Activated B cell treated with CpG ODN at 0.5 μM for 24 hours (primary cell): ENCODE measurements at regions of chr1 and their contacts with region 1.

Region 1: DNA sequence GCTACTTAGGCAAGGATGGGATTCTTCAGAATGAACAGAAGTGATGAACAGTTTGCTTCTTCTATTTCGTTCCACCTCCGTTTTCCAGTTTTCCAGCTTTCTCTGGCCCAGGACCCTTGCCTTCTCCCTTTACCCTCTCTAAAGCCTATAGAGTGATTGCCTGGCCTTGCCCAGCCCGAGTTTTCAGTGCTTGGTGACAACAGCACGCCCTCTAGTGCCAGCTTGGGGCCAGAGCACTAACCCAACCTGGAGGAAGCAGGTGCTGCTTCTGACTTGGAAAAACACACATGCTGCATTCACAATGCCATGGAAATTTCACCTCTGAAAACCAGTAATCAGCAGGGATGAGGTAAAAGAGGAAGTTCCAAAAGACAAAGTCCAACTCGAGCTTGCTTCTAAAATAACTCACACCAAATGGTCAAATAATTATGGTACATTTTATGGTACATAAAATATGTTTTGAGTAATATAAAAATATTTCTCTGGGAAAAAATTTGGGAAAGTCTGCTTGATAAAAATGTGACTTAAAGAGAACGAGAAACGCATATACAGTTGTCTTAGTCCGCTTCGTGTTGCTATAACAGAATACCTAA is 26.1 kb downstream of the UBE2T start:
- DNase-seq: peak; percentile 51
- ATAC-seq: peak; percentile 78
- H3K4me3 Mint-ChIP-seq: no peak overlapping the region
- H3K27ac Mint-ChIP-seq: no peak overlapping the region
- H3K4me1 Mint-ChIP-seq: no peaks in the 10 kb centered on the region
- H3K27me3 Mint-ChIP-seq: peaks cover 10% of the 10 kb centered on the region
- CTCF ChIP-seq: peak; percentile 64

Region 2: GRCh38 chr1:202009326-202010179 is 306.1 kb before region 1 on chr1:
- CTCF ChIA-PET with region 1: no interaction called
- POLR2A ChIA-PET with region 1: no interaction called
- intact Hi-C with region 1: loop called (anchors 5 kb)
- DNase-seq: no peak
- ATAC-seq: peak; percentile 65
- H3K4me3 Mint-ChIP-seq: peak overlapping the region; percentile 28
- H3K27ac Mint-ChIP-seq: no peak overlapping the region
- H3K4me1 Mint-ChIP-seq: peaks cover 10% of the 10 kb centered on the region
- H3K27me3 Mint-ChIP-seq: no peaks in the 10 kb centered on the region
- CTCF ChIP-seq: peak; percentile 64

Region 3: GRCh38 chr1:202154766-202155477 is 160.8 kb before region 1 on chr1:
- CTCF ChIA-PET with region 1: interaction called, 29 read pairs
- POLR2A ChIA-PET with region 1: no interaction called
- intact Hi-C with region 1: loop called (anchors 1 kb)
- DNase-seq: no peak
- ATAC-seq: peak; percentile 73
- H3K4me3 Mint-ChIP-seq: no peak overlapping the region
- H3K27ac Mint-ChIP-seq: no peak overlapping the region
- H3K4me1 Mint-ChIP-seq: peaks cover 37% of the 10 kb centered on the region
- H3K27me3 Mint-ChIP-seq: no peaks in the 10 kb centered on the region
- CTCF ChIP-seq: no peak

Region 4: DNA sequence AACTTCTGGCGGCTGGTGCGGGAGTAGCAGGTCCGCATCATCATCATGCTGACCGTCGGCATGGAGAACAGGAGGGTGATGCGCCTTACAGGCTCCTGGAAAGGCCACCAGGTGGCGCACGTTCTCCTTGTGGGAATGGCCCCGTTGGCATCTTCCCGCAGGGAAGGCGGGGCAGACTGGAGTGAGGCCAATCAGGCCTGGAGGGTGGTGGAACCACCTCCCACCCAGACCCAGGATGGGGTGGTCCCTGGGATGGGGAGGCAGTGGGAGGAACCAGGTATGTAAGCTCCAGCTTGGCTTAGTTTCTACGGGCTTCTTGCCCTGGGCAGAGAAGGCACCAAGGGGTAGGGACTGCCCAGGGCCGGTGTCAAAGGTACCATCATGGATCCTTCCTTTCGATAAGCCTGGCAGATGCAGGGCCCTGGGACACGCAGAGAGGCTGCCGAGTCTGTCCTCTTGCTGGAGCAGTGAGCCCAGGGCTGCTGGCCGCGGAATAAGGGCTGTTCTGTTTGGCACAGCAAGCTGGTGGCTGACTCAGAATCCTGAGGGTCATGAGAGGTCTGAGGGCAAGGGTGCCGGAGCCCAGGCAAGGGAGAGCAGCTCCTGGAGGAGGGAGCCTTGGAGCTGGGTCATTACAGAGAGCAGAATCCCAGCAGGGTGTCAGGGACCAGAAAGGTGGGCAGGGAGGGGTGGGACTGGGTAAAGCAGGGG is 130.8 kb before region 1 on chr1:
- CTCF ChIA-PET with region 1: interaction called, 18 read pairs
- POLR2A ChIA-PET with region 1: no interaction called
- intact Hi-C with region 1: loop called (anchors 1 kb)
- DNase-seq: peak; percentile 55
- ATAC-seq: peak; percentile 65
- H3K4me3 Mint-ChIP-seq: no peak overlapping the region
- H3K27ac Mint-ChIP-seq: no peak overlapping the region
- H3K4me1 Mint-ChIP-seq: peaks cover 3% of the 10 kb centered on the region
- H3K27me3 Mint-ChIP-seq: peaks cover 32% of the 10 kb centered on the region
- CTCF ChIP-seq: no peak

Region 5: GRCh38 chr1:202192770-202193613 is 122.7 kb before region 1 on chr1:
- CTCF ChIA-PET with region 1: interaction called, 40 read pairs
- POLR2A ChIA-PET with region 1: no interaction called
- intact Hi-C with region 1: loop called (anchors 1 kb)
- DNase-seq: peak; percentile 57
- ATAC-seq: peak; percentile 70
- H3K4me3 Mint-ChIP-seq: peak overlapping the region; percentile 64
- H3K27ac Mint-ChIP-seq: no peak overlapping the region
- H3K4me1 Mint-ChIP-seq: peaks cover 18% of the 10 kb centered on the region
- H3K27me3 Mint-ChIP-seq: peaks cover 30% of the 10 kb centered on the region
- CTCF ChIP-seq: no peak

Region 6: DNA sequence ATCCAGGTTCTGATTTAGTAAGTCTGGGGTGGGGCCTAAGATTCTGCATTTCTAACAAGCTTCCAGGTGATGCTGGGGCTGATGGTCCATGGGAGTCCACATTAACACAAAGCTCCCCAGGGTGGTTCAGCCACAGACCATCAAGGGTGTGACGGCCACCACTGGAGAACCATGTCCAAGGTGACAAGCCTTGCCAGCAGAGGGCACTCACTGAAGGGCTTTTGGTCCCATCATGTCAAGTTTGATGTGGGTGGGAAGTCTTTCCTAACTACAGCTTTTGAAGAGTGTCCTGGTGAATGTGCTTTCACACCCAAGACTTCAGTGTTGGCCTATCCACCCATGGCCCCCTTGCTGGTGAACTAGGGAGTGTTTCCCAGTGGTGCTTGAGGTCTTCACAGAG is 41.1 kb before region 1 on chr1:
- CTCF ChIA-PET with region 1: no interaction called
- POLR2A ChIA-PET with region 1: no interaction called
- intact Hi-C with region 1: loop called (anchors 1 kb)
- DNase-seq: no peak
- ATAC-seq: no peak
- H3K4me3 Mint-ChIP-seq: no peak overlapping the region
- H3K27ac Mint-ChIP-seq: no peak overlapping the region
- H3K4me1 Mint-ChIP-seq: no peaks in the 10 kb centered on the region
- H3K27me3 Mint-ChIP-seq: peaks cover 15% of the 10 kb centered on the region
- CTCF ChIP-seq: no peak

Region 7: DNA sequence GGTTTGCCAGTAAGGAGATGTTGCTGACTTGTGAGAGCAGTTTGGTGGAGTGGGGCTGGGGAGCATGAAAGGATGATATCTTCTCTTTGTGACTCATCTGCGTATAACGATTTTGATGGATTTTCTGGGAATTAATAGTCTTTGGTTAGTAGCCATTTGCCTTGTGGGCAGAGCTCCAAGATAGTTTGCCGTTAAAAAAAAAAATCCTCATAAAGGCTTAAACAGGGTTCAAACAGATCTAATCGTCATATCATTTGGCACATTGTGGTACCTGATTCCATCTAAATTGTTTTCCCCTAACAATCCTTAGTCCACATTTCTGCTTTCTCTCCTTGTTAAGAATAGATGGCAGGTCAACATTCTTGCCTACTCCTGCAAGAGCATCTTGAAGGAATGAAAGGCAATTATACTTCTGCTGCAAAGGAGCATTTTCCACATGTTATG is 200.8 kb after region 1 on chr1:
- CTCF ChIA-PET with region 1: no interaction called
- POLR2A ChIA-PET with region 1: no interaction called
- intact Hi-C with region 1: no loop called
- DNase-seq: no peak
- ATAC-seq: no peak
- H3K4me3 Mint-ChIP-seq: no peak overlapping the region
- H3K27ac Mint-ChIP-seq: no peak overlapping the region
- H3K4me1 Mint-ChIP-seq: peaks cover 6% of the 10 kb centered on the region
- H3K27me3 Mint-ChIP-seq: no peaks in the 10 kb centered on the region
- CTCF ChIP-seq: no peak